H1 (cell line): ENCODE measurements at regions of chr1 and their contacts with region 1.

Region 1: DNA sequence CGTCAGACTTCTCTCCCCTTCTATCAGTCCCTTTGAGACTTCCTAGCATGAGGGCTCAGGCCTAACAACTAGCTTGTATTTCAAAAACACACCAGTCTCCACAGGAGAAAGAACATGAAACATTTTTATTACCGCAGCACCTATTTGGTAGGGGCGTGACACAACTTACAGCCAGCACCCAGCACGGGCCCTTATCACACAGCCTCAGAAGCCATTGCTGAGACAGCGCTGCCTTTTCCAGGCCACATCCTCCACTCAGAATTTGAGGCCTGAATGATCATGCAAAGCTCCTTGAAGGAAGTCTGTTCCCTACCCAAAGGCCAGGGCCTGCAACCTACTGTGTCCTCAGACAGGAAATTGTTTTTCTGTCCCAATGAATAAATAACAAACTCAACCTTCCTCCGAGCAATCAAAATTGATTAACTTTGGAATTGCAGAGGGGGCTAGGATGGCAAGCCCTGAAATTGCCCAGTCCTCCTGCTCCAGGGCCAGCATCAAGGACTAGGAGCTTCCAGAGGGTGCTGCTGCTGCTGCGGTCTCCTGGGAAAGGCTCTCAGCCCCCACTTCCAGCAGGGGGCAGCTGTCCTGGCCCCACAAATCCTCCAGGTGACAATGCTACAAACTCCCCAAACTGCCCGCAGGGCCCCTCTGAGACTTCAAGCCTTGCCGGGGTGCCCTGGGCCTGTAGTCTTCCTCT is 94.3 kb upstream of the GALNT2 start:
- DNase-seq: peak; percentile 25 to 66
- H3K4me3 ChIP-seq: no peak overlapping the region
- H3K27ac ChIP-seq: no peak overlapping the region
- H3K4me1 ChIP-seq: no peaks in the 10 kb centered on the region
- H3K27me3 ChIP-seq: no peaks in the 10 kb centered on the region
- CTCF ChIP-seq: peak; percentile 77 to 82 (median 78)
- EP300 ChIP-seq: no peak
- POLR2A ChIP-seq: no peak
- RAD21 ChIP-seq: peak; percentile 63 to 73

Region 2: GRCh38 chr1:229710746-229711145 is 262.0 kb before region 1 on chr1:
- CTCF ChIA-PET with region 1: no interaction called
- POLR2A ChIA-PET with region 1: no interaction called
- DNase-seq: no peak
- H3K4me3 ChIP-seq: no peak overlapping the region
- H3K27ac ChIP-seq: no peak overlapping the region
- H3K4me1 ChIP-seq: peaks cover under 1 to 11% (median 5%) of the 10 kb centered on the region in 4 experiments; a peak in 5 of 7 replicates
- H3K27me3 ChIP-seq: no peaks in the 10 kb centered on the region
- CTCF ChIP-seq: no peak
- EP300 ChIP-seq: no peak
- POLR2A ChIP-seq: no peak
- RAD21 ChIP-seq: peak in 1 of 2 experiments; percentile 17; a peak in 1 of 4 replicates

Region 3: DNA sequence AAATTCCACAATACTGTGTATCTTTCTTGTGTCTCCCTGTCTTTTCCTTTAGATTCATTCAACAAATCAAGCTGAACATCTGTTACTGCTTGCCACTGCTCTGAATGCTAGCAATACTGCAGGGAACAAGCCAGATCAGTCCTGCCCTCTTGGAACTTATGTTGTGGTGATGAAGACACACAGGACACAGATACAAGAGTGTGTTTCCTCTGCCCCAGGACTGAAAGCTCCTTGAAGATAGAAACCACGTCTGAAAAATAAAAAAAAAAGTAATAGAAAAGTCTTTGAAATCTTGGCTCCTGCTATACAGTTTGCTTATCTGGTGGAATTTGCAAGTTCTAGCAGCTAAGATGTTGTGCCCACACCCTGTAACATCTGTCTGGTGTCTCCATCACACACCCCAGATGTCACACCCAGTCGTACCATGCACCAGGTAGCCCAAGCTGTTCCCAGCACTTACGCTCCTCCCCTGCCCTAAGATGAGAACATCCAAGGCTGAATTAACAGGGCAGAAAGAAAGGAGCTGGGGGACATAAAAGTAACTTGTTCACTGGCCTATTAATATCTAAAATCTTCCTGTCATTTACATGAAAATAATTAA is 14.1 kb after region 1 on chr1:
- CTCF ChIA-PET with region 1: interaction called, 11 read pairs
- POLR2A ChIA-PET with region 1: no interaction called
- DNase-seq: no peak
- H3K4me3 ChIP-seq: no peak overlapping the region
- H3K27ac ChIP-seq: no peak overlapping the region
- H3K4me1 ChIP-seq: no peaks in the 10 kb centered on the region; a peak in 3 of 7 replicates
- H3K27me3 ChIP-seq: no peaks in the 10 kb centered on the region
- CTCF ChIP-seq: no peak
- EP300 ChIP-seq: peak in 1 of 2 experiments; percentile 48; a peak in 1 of 3 replicates
- POLR2A ChIP-seq: no peak
- RAD21 ChIP-seq: no peak

Region 4: GRCh38 chr1:230002164-230002803 is 29.5 kb after region 1 on chr1:
- CTCF ChIA-PET with region 1: interaction called, 10 read pairs
- POLR2A ChIA-PET with region 1: no interaction called
- DNase-seq: no peak
- H3K4me3 ChIP-seq: no peak overlapping the region
- H3K27ac ChIP-seq: no peak overlapping the region
- H3K4me1 ChIP-seq: peaks cover 0 to 3% (median 0%) of the 10 kb centered on the region in 4 experiments; a peak in 2 of 7 replicates
- H3K27me3 ChIP-seq: no peaks in the 10 kb centered on the region
- CTCF ChIP-seq: no peak
- EP300 ChIP-seq: no peak
- POLR2A ChIP-seq: no peak
- RAD21 ChIP-seq: no peak

Region 5: DNA sequence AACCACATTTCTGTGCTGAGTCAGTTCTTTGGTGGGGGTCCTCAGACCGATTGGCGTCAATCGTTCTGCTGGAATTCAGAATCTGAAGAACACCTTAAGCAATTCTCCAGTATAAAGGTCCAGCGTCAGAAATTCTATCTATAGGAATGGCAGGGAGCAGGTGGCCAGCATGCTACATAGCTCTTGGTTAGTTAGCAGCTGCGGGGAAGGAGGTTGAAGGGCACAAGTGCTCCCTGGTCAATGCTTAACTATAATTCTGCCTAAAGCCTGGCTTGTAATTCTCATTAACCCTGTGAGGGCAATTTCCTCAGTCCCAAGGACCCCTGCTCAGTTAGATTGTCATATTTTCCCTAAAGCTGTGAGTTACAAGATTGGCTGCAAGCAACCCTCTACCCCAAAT is 40.0 kb after region 1 on chr1:
- CTCF ChIA-PET with region 1: no interaction called
- POLR2A ChIA-PET with region 1: no interaction called
- DNase-seq: no peak
- H3K4me3 ChIP-seq: no peak overlapping the region
- H3K27ac ChIP-seq: no peak overlapping the region
- H3K4me1 ChIP-seq: peaks cover 0 to 5% (median 2%) of the 10 kb centered on the region in 4 experiments; a peak in 3 of 7 replicates
- H3K27me3 ChIP-seq: no peaks in the 10 kb centered on the region; a peak in 1 of 7 replicates
- CTCF ChIP-seq: no peak
- EP300 ChIP-seq: no peak
- POLR2A ChIP-seq: no peak
- RAD21 ChIP-seq: no peak